ENCODE measurements at regions of chr11 and their contacts with region 1.

Region 1: GRCh38 chr11:28836285-28837081 is 728.3 kb downstream of the METTL15 start:
- DNase-seq: peak; percentile 99
- ATAC-seq: peak; percentile 79
- H3K4me3 ChIP-seq: no peak overlapping the region
- H3K27ac ChIP-seq: peak overlapping the region; percentile 98
- H3K4me1 ChIP-seq: peaks cover 14% of the 10 kb centered on the region
- H3K27me3 ChIP-seq: no peaks in the 10 kb centered on the region
- CTCF ChIP-seq: no peak
- POLR2A ChIP-seq: peak; percentile 45
- RAD21 ChIP-seq: peak; percentile 8; the same call in 1 of the 2 replicates

Region 2: DNA sequence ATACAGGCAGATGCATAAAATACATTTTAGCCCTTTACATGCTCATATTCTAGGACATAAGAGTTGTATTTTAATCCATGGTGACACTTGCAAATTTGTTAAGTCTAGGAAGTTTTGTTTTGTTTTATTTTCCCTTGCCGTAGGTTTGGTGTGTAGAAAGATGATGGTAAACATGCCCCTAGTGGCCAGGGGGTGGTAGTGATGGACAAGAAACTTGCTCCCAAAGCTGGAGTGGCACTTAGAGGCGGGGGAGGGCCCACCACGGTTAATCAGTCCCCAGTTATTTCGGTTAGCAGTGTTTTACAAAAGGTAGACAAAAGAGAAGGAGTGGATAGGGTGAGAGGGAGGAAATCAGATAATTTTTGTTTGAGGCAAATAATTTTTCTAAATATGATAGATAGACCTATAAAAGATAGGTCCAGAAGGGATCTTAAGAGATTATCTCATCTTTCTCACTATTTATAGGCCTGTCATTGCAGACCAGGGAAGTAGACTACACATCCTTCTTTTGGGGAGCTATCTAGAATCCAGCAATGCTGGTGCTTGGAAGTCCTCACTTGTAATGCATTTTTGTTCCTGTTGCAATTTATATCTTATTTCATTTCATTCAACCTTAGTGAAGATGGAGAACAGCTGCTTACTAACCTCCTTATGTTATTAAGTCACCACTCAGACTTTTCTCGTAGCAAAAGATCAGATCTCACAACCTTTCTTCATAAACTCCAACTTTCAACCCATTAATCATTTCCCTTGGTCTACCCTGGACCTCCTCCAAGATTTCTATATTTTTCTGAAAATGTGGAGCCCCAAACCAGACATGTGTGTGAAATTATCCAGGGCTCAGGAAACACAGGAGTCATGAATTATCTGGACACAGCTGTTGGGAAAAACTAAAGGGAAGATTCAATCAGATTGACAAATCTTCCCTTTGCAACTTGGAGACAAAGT is 1130.3 kb before region 1 on chr11:
- CTCF ChIA-PET with region 1: no interaction called
- POLR2A ChIA-PET with region 1: no interaction called
- dilution Hi-C with region 1: no loop called
- in situ Hi-C with region 1: loop called (anchors 25 kb)
- intact Hi-C with region 1: no loop called
- DNase-seq: peak; percentile 64
- ATAC-seq: no peak
- H3K4me3 ChIP-seq: no peak overlapping the region
- H3K27ac ChIP-seq: peak overlapping the region; percentile 63; the same call in 1 of the 2 replicates
- H3K4me1 ChIP-seq: peaks cover 8% of the 10 kb centered on the region
- H3K27me3 ChIP-seq: no peaks in the 10 kb centered on the region
- CTCF ChIP-seq: peak; percentile 48
- POLR2A ChIP-seq: no peak
- RAD21 ChIP-seq: peak; percentile 40

Region 3: GRCh38 chr11:28107748-28108618 is 728.5 kb before region 1 on chr11 and contains the starts of genes KIF18A and METTL15:
- CTCF ChIA-PET with region 1: no interaction called
- POLR2A ChIA-PET with region 1: no interaction called
- dilution Hi-C with region 1: no loop called
- in situ Hi-C with region 1: no loop called
- intact Hi-C with region 1: loop called (anchors 1 kb)
- DNase-seq: peak; percentile 99
- ATAC-seq: peak; percentile 89
- H3K4me3 ChIP-seq: peak within 1 kb of the TSS; percentile 67
- H3K27ac ChIP-seq: peak within 1 kb of the TSS; percentile 69
- H3K4me1 ChIP-seq: no peaks in the 10 kb centered on the region
- H3K27me3 ChIP-seq: no peaks in the 10 kb centered on the region
- CTCF ChIP-seq: no peak
- POLR2A ChIP-seq: peak; percentile 96
- RAD21 ChIP-seq: peak; percentile 26
- total RNA-seq, gene KIF18A: 24.4 and 37.2 TPM in 2 replicates
- total RNA-seq, gene METTL15: 24.4 and 30.5 TPM in 2 replicates

Region 4: DNA sequence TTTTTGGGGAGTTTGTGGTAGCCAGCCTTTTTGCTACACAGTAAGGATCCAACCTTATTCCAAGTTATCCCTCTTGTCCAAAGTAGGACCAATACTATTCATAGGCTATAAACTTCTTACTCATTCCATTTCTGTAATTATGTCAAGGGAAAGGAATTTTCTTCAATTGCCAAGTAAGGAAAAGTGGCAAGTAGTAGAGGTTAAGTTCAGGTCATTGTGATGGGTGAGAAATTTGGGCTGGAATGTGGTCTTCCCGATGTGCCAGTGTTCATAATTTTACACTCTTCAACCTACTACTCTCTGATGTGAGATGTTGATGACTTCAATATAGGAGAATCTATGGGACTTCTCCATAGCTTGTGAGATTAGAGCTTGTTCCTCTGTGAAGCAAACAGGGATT is 79.5 kb before region 1 on chr11:
- CTCF ChIA-PET with region 1: no interaction called
- POLR2A ChIA-PET with region 1: interaction called, 7 read pairs
- dilution Hi-C with region 1: no loop called
- in situ Hi-C with region 1: no loop called
- intact Hi-C with region 1: loop called (anchors 1 kb)
- DNase-seq: peak; percentile 89
- ATAC-seq: peak; percentile 65
- H3K4me3 ChIP-seq: no peak overlapping the region
- H3K27ac ChIP-seq: peak overlapping the region; percentile 96
- H3K4me1 ChIP-seq: peaks cover 10% of the 10 kb centered on the region; the same call in 1 of the 2 replicates
- H3K27me3 ChIP-seq: no peaks in the 10 kb centered on the region
- CTCF ChIP-seq: no peak
- POLR2A ChIP-seq: 0 out of 2 replicates have a peak, but pooled peaks have one; percentile 8
- RAD21 ChIP-seq: no peak

Region 5: DNA sequence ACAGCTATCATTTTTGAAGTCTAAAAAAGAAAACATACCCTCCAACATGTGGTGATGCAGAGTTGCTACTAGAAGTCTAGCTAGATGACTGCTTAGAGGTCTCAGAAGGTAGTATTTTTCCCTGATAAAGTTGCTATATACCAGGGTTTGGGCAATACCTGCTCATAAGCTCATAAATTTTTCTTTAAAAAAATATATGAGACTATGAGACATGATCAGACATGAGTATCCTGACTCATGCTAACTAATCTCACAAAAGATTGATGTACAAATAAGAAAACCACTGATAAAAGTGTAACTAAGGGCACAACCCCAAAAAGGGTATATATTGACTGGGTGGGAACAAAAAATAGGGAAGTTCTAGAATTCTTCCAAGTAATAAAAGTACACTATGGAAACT is 12.6 kb after region 1 on chr11:
- CTCF ChIA-PET with region 1: no interaction called
- POLR2A ChIA-PET with region 1: no interaction called
- dilution Hi-C with region 1: no loop called
- in situ Hi-C with region 1: no loop called
- intact Hi-C with region 1: no loop called
- DNase-seq: no peak
- ATAC-seq: no peak
- H3K4me3 ChIP-seq: no peak overlapping the region
- H3K27ac ChIP-seq: no peak overlapping the region
- H3K4me1 ChIP-seq: no peaks in the 10 kb centered on the region
- H3K27me3 ChIP-seq: no peaks in the 10 kb centered on the region
- CTCF ChIP-seq: no peak
- POLR2A ChIP-seq: no peak
- RAD21 ChIP-seq: no peak

Region 6: GRCh38 chr11:29119707-29120695 is 283.5 kb after region 1 on chr11:
- CTCF ChIA-PET with region 1: no interaction called
- POLR2A ChIA-PET with region 1: interaction called, 10 read pairs
- dilution Hi-C with region 1: no loop called
- in situ Hi-C with region 1: no loop called
- intact Hi-C with region 1: loop called (anchors 1 kb)
- DNase-seq: peak; percentile 99
- ATAC-seq: peak; percentile 86
- H3K4me3 ChIP-seq: peak overlapping the region; percentile 23; the same call in 1 of the 2 replicates
- H3K27ac ChIP-seq: peak overlapping the region; percentile 92
- H3K4me1 ChIP-seq: peaks cover 9% of the 10 kb centered on the region
- H3K27me3 ChIP-seq: no peaks in the 10 kb centered on the region
- CTCF ChIP-seq: no peak
- POLR2A ChIP-seq: peak; percentile 26; the same call in 1 of the 2 replicates
- RAD21 ChIP-seq: peak; percentile 8; the same call in 1 of the 2 replicates

Region 7: DNA sequence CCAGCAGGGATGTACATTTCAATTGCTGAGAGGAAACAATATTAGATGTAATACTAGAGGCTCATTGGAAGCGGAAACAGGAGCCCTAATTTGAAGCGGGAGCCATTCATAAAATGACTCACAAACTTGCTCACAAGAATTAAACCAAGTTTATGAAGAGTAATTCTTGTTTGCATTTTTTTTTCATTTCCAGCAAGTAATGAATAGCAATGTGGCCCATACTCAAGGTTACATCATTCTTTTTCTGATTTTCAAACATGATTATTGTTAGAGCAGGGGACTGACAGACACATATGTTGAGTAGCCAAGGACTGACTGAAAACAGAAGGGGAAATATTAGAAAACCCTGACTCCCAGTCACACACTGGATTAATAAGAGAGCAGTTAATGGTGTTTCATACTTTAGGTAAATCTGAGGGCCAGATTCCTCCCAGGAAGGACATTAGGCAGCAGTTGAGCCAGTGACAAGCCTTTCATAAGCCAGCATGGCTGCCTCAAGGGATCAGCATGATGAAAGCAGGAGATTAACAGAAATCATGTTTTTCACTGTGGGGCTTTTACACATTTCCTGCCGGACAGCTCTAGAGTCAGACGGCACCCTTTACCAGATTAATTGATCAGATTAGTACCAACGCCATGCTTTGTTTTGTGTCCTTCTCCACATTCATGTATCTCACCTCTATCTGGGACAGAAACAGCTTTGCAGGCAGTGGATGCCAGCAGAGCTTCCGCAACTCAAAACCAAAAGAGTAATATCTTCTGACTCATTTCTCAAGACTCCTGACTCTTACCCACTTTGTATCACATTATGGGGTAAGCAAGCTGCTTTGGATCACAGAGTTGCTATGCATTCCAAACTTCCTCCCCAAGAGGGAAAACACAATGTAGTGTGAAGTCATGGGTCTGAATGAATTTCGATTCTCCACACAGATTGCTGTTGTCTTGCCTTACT is 348.7 kb after region 1 on chr11:
- CTCF ChIA-PET with region 1: no interaction called
- POLR2A ChIA-PET with region 1: no interaction called
- dilution Hi-C with region 1: no loop called
- in situ Hi-C with region 1: no loop called
- intact Hi-C with region 1: loop called (anchors 1 kb)
- DNase-seq: peak; percentile 98
- ATAC-seq: peak; percentile 83
- H3K4me3 ChIP-seq: no peak overlapping the region
- H3K27ac ChIP-seq: peak overlapping the region; percentile 100
- H3K4me1 ChIP-seq: peaks cover 11% of the 10 kb centered on the region
- H3K27me3 ChIP-seq: no peaks in the 10 kb centered on the region
- CTCF ChIP-seq: no peak
- POLR2A ChIP-seq: no peak
- RAD21 ChIP-seq: peak; percentile 26; the same call in 1 of the 2 replicates

Measured in IMR-90 (cell line).